ENCODE measurements at regions of chr6 and their contacts with region 1.

Region 1: DNA sequence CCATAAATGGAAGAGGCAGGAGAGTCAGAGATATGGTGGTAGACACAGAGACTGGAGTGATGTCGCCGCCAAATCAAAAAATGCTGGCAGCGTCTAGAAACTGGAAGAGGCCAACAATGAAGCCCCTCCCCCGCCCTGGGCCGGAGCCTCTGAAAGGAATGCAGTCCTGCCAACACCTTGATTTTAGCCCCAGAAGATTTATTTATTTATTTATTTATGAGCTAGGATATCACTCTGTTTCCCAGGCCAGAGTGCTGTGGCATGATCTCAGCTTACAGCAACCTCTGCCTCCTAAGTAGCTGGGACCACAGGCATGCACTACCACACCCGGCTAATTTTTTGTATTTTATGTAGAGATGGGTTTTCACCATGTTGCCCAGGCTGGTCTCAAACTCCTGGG is 82.6 kb upstream of the CCDC167 start:
- DNase-seq: no peak
- H3K4me3 ChIP-seq: no peak overlapping the region
- H3K27ac ChIP-seq: no peak overlapping the region
- H3K4me1 ChIP-seq: peaks cover 0 to 9% (median 6%) of the 10 kb centered on the region in 4 experiments; a peak in 4 of 7 replicates
- H3K27me3 ChIP-seq: no peaks in the 10 kb centered on the region; a peak in 2 of 7 replicates
- CTCF ChIP-seq: no peak
- EP300 ChIP-seq: no peak
- POLR2A ChIP-seq: no peak
- RAD21 ChIP-seq: no peak

Region 2: GRCh38 chr6:37489660-37490361 is 92.5 kb before region 1 on chr6:
- CTCF ChIA-PET with region 1: interaction called, 11 read pairs
- POLR2A ChIA-PET with region 1: no interaction called
- DNase-seq: no peak
- H3K4me3 ChIP-seq: no peak overlapping the region
- H3K27ac ChIP-seq: no peak overlapping the region
- H3K4me1 ChIP-seq: peaks cover 12 to 30% (median 18%) of the 10 kb centered on the region in 4 experiments
- H3K27me3 ChIP-seq: peaks cover 0 to 2% (median 0%) of the 10 kb centered on the region in 4 experiments; a peak in 1 of 7 replicates
- CTCF ChIP-seq: no peak
- EP300 ChIP-seq: no peak
- POLR2A ChIP-seq: no peak
- RAD21 ChIP-seq: no peak

Region 3: GRCh38 chr6:37602346-37602745 is 20.0 kb after region 1 on chr6:
- CTCF ChIA-PET with region 1: interaction called, 15 read pairs
- POLR2A ChIA-PET with region 1: interaction called, 3 read pairs
- DNase-seq: no peak
- H3K4me3 ChIP-seq: no peak overlapping the region
- H3K27ac ChIP-seq: no peak overlapping the region
- H3K4me1 ChIP-seq: peaks cover 4 to 15% (median 7%) of the 10 kb centered on the region in 4 experiments; a peak in 6 of 7 replicates
- H3K27me3 ChIP-seq: 0 out of 7 replicates have a peak, but pooled peaks cover 0 to 2% (median 0%) of the 10 kb centered on the region in 4 experiments
- CTCF ChIP-seq: no peak
- EP300 ChIP-seq: no peak
- POLR2A ChIP-seq: no peak
- RAD21 ChIP-seq: no peak

Region 4: DNA sequence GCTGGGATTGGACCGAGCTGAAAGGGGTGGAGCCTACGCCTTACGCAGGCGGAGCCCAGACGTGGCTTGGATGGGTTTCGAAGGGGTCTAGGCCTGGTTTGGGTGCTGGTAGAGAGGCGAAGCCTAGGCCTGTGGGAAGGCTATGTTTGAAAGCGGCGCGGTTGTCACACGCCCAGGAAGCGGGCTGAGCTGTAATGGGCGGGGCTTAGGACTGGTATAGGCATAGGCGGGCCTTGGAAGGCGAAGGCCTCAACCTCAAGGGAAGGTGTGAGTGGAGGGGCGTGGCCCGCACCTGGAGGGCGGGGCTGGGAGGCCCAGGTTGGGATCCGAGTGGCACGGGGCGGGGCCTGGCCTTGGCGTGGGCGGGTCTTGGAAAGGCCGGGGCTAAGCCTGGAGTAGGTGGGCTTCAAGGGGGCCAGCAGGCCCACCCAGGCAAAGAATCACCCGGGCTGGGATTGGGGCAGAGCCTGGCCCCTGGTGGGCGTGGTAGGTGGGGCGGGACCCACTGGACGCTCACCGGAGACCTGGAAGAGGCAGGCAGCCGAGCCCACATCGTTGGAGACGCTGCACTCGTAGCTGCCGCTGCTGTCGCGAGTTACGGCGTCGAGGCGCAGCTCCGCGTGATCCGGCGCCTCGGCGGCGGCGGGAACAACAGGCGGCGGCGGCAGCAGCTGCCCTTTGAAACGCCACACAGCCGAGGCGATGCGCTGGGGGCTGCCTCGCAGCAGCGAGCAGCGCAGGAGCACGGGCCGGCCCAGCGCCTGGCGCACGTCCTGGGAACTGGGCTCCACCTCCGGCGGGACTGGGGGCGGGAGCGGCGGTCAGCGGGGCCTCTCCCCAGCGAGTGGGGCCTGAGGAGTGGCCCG is 66.4 kb after region 1 on chr6:
- CTCF ChIA-PET with region 1: interaction called, 16 read pairs
- POLR2A ChIA-PET with region 1: interaction called, 3 read pairs
- DNase-seq: peak; percentile 77 to 100
- H3K4me3 ChIP-seq: peak overlapping the region; percentile 9 to 54 (median 38)
- H3K27ac ChIP-seq: no peak overlapping the region
- H3K4me1 ChIP-seq: peaks cover 0 to 10% (median 6%) of the 10 kb centered on the region in 4 experiments; a peak in 4 of 7 replicates
- H3K27me3 ChIP-seq: peaks cover 3 to 27% (median 19%) of the 10 kb centered on the region in 4 experiments
- CTCF ChIP-seq: peak in 1 of 3 experiments; percentile 6; a peak in 1 of 4 replicates
- EP300 ChIP-seq: peak in 1 of 2 experiments; percentile 52; a peak in 1 of 3 replicates
- POLR2A ChIP-seq: 0 out of 3 replicates have a peak, but pooled peaks of 1 of the 2 experiments have one; percentile 30
- RAD21 ChIP-seq: no peak

Measured in H1 (cell line).